ENCODE measurements at regions of chr11 and their contacts with region 1.

Region 1: GRCh38 chr11:44538375-44539054 is 26.9 kb upstream of the CD82 start:
- DNase-seq: peak; percentile 88
- CTCF ChIP-seq: peak; percentile 93

Region 2: GRCh38 chr11:44095506-44096394 is 442.8 kb before region 1 on chr11 and contains the start of gene EXT2:
- in situ Hi-C with region 1: loop called (anchors 10 kb)
- DNase-seq: peak; percentile 95
- CTCF ChIP-seq: peak; percentile 98

Region 3: GRCh38 chr11:44372989-44373388 is 165.5 kb before region 1 on chr11:
- in situ Hi-C with region 1: no loop called
- DNase-seq: no peak
- CTCF ChIP-seq: no peak

Measured in GM13976 (cell line).